ENCODE measurements at regions of chr7 and their contacts with region 1.

Region 1: DNA sequence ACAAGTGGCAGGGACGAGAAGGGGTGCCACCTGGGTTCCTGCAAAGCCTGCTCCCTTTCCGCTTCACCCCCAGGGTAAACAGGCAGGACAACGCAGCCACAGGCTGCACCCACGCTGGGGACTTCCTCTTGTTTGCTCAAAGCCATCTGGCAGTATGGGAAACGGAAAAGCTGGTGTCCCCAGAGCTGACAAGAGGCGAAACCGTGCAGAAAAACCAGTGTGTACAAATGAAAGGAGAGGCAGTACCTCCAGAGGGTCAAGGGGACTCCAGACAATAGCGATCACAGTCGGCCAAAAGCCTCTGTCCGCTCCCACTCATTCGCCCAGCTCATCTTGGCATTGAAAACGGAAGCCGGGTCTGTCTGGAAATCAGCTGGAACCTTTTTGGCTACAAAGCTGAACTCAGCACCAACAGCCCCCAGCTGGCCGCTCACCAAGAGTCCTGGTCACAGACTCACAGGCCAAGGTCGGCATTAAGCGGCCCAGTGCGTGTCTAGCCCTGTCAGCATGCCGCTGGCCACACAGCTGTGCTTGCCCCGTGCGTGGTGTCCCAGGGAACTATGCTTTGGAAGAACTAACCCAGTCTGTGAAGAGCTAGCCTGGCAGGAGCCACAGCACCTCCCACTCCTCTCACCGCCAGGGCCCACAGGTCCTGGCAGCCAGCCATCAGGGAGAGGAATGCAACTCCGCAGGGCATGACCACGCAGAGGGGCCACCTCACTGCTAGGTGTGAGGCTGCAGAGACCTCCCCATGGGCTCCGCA is 10.4 kb downstream of the TNS3 start:
- DNase-seq: peak; percentile 82

Region 2: DNA sequence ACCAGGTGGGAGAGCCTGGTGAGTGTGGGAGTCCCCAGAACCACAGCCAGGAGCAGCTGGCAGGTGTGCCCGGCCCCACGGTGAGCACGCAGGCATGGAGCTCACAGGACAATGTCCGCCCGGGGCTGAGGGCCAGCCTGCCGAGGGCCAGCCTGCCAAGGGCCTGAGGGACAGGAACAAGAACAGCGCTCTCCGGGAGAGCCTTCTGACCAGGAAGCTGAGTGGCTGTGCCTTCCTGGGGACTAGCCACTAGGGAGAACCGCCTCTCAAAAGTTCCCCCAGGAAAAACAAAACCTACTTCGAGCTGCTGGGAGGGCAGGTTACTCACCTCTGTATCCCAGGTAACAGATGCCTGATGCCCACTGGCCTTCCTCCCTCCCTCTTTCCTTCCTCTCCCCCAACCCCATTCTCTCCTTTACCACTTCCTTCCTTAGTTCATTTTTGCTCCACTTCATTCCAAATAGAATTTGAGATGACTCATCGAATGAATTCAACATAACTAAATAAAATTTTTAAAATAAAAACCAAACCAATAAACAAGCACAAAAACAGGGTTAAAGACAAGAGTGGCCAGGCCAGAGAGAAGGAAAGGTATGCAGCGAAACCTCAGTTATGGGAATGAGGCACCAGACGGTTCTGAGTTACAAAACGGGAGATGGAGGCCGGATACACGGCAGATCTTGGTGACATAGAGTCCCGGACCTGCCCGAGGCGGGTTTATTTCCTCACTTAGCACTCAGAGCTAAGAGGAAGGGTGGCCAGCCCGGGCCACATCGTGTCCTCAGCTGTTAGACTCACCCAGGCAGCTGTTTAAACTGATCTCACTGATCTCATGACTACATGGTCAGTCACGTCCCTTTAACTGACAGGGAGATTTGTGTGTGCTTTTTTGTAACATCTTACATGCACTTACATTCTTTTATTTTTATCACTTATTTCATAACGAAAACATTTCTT is 118.1 kb before region 1 on chr7:
- intact Hi-C with region 1: loop called (anchors 5 kb)
- DNase-seq: no peak

Region 3: GRCh38 chr7:47497367-47498096 is 74.0 kb before region 1 on chr7:
- intact Hi-C with region 1: loop called (anchors 5 kb)
- DNase-seq: no peak

Region 4: GRCh38 chr7:47520406-47520805 is 51.1 kb before region 1 on chr7:
- intact Hi-C with region 1: no loop called
- DNase-seq: no peak

Region 5: GRCh38 chr7:47536661-47537611 is 34.6 kb before region 1 on chr7:
- intact Hi-C with region 1: no loop called
- DNase-seq: no peak

Region 6: DNA sequence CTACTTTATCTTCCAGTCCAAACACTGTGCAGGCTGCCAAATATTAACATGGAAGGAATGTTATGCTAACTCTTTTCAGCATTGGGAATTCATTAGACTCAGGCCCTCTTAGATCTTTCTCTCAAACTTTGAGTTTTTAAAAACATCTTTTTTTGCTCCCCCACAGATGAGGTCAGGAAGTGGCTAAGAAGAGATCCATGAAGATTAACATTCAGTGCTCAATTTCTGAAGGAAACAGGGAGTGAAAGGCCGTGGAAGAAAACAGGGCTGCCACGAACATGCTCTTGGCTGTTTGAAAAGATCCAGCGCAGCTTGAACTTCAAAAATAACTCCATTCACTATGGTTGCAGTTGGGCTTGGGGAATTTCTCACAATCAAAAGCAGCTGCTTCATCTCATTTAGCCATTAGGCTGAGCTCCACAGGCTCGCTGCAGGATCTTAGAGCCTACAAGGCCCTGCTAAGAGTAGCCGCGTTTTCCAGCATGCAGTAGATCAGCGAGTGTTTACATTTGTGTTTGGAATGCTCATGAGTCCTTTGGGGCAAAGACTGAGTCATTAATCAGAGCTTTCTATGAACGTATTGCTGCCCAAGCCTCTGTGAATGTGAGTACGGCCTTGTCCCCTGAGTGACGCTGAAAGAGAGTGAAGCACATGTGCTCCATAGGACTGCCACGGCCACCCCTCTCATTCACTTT is 51.6 kb after region 1 on chr7:
- intact Hi-C with region 1: no loop called
- DNase-seq: no peak

Region 7: GRCh38 chr7:47714669-47715607 is 143.4 kb after region 1 on chr7:
- intact Hi-C with region 1: no loop called
- DNase-seq: no peak

Measured in cardiac septum (tissue), 1 donor.